ENCODE measurements at regions of chr20 and their contacts with region 1.

Region 1: DNA sequence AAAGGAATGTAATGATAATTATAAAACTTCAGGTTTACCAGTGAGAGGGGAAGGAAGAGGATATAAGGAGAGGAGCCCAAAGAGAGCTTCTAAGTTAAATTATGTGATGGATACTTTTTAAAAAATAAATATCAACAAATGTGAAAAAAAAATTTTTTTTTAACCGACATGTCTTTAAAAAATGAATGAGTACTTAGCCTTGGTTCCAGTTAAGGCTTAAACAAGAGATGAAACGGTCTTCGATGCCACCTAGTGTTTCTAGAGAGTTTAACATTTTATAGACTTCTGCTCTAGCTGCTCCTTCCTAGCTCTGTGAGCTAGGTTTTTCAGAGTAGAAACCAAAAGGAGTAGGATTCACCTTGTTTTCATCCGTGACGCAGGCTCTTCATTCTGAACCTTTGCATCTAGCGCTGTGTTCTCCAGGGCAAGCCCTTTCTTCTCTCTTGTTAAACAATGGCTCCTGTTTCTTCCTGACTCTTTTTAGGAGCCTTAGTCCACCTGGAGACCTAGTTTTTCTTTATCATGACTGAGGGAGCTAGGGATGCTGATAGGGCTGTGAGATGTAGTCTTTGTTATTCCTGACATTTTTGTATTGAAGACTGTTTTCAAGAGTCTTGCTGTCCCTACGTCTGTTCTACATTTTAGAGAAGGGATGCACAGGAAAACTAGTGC is 42.4 kb upstream of the GNRH2 start:
- DNase-seq: no peak
- ATAC-seq: peak; percentile 64 to 82

Region 2: GRCh38 chr20:2752567-2753460 is 248.2 kb before region 1 on chr20:
- intact Hi-C with region 1: loop called in 1 of 2 experiments (anchors 10 kb)
- DNase-seq: peak; percentile 47
- ATAC-seq: no peak

Measured in left cardiac atrium (tissue), 4 donors.